Sigmoid colon (tissue), 7 donors: ENCODE measurements at regions of chr1 and their contacts with region 1.

Region 1: DNA sequence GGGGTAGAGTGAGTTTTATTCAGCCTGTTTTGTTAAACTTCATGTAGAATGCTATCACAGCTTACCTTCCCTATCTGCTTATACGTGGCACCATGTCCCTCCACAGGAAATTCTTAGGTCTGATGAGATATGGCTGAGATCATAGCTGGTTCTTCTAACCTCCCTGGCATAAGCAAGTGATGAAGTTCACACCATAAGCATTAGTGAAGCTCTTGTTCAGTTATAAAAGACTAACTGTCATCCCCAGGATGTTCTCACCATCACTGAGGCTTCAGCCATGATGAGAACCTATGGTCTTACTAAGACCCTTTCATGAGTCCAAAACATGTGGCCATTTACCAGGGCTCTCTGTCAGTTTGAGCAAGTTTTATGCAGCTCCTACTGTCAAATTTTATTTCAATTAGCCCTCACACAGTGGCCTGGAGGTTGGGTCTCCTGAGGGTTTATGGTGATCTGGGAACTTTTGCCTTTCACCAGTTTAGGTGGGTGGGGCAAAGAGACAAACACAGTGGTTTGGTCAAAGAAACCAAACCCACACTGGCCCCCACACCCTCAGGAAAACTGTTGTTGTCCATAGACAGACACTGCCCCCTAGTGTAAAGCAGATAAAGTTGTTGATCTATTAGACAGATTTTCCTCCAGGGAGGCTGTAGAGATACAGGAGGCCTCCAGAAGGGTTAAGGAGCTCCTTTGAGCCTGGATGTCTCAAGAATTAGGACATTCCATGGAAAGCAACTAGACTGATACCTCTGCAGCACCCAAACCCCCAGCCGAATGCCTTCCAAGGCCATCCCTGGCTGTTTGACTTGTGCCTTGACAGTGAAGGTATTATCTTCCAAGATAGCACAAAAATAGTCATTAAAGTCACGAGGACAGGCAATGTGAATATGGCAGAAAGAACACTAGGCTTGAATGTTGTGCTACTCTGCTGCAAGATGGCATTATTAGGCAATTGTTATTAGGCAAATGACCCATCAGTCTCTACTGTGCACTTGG is 5.0 kb downstream of the SLC22A15 start:
- DNase-seq: no peak
- H3K4me3 ChIP-seq: no peak overlapping the region
- H3K27ac ChIP-seq: no peak overlapping the region
- H3K4me1 ChIP-seq: peaks cover 0 to 7% (median 5%) of the 10 kb centered on the region in 4 donors
- H3K27me3 ChIP-seq: peaks cover 4 to 13% (median 6%) of the 10 kb centered on the region in 3 donors
- CTCF ChIP-seq: peak in 3 of 4 experiments; percentile 38 to 52 (median 43)
- EP300 ChIP-seq: no peak
- POLR2A ChIP-seq: no peak

Region 2: GRCh38 chr1:115426231-115426771 is 555.0 kb before region 1 on chr1:
- intact Hi-C with region 1: no loop called
- DNase-seq: peak; percentile 67
- H3K4me3 ChIP-seq: no peak overlapping the region
- H3K27ac ChIP-seq: no peak overlapping the region
- H3K4me1 ChIP-seq: no peaks in the 10 kb centered on the region
- H3K27me3 ChIP-seq: no peaks in the 10 kb centered on the region
- CTCF ChIP-seq: no peak
- EP300 ChIP-seq: no peak
- POLR2A ChIP-seq: no peak

Region 3: DNA sequence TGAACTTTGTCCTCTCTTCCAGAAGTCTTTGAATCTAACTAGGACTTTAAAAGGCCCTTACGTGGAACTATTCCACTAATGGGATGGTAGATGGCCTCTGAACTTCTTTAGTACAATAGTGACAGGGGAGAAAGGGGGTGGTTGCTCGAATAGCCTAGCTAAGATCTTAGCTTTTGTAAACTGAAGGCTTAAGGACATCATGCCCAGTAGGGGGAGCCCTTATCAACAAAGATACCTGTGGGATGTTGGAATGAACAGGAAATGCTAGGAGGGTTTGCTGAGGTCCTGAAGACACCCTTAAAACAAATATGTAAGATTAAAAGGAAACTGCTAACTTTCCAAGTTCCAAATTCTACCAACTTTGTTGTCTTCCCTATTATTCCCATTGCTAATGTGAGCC is 173.6 kb before region 1 on chr1:
- intact Hi-C with region 1: loop called (anchors 2 kb)
- DNase-seq: no peak
- H3K4me3 ChIP-seq: no peak overlapping the region
- H3K27ac ChIP-seq: no peak overlapping the region
- H3K4me1 ChIP-seq: no peaks in the 10 kb centered on the region
- H3K27me3 ChIP-seq: no peaks in the 10 kb centered on the region
- CTCF ChIP-seq: peak in 3 of 4 experiments; percentile 33 to 58 (median 44)
- EP300 ChIP-seq: no peak
- POLR2A ChIP-seq: no peak